B cell (primary cell): ENCODE measurements at regions of chr21 and their contacts with region 1.

Region 1: DNA sequence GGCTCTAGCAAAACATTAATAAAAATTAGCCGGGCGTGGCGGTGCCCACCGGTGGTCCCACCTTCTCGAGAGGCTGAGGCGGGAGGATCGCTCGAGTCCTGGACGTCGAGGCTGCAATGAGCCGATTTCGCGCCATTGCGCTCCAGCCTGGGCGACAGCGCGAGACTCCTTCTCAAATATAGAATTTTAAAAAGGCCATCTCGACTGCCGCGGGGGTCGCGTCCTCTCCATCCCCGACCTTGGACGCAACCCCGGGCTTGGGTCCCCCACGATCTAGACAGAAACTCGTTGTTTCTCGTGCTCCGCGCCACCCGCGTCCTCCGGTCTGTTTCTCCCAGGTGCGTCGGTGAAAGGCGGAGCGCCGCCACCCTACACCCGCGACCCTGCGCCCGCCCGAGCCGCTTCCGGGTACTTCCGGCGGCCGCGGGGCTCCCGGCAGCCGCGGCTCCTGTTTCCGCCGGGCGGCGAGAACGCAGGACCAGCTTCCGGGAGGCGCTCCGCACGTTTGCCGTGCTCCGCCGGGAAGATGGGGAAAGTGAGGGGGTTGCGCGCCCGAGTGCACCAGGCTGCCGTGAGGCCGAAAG is at the start of gene SLX9:
- DNase-seq: peak; percentile 84
- ATAC-seq: peak; percentile 87
- H3K4me3 ChIP-seq: peak within 1 kb of the TSS; percentile 54 to 80 (median 74)
- H3K4me3 Mint-ChIP-seq: peak within 1 kb of the TSS; percentile 89
- H3K27ac ChIP-seq: peak within 1 kb of the TSS in 1 of 2 donors; percentile 57
- H3K27ac Mint-ChIP-seq: peak within 1 kb of the TSS; percentile 86
- H3K4me1 ChIP-seq: peaks cover 26 to 40% of the 10 kb centered on the region in 2 donors
- H3K4me1 Mint-ChIP-seq: peaks cover 43% of the 10 kb centered on the region
- H3K27me3 ChIP-seq: no peaks in the 10 kb centered on the region
- H3K27me3 Mint-ChIP-seq: no peaks in the 10 kb centered on the region
- CTCF ChIP-seq: no peak
- total RNA-seq, gene SLX9: 12.6 and 15.9 TPM in 2 replicates

Region 2: DNA sequence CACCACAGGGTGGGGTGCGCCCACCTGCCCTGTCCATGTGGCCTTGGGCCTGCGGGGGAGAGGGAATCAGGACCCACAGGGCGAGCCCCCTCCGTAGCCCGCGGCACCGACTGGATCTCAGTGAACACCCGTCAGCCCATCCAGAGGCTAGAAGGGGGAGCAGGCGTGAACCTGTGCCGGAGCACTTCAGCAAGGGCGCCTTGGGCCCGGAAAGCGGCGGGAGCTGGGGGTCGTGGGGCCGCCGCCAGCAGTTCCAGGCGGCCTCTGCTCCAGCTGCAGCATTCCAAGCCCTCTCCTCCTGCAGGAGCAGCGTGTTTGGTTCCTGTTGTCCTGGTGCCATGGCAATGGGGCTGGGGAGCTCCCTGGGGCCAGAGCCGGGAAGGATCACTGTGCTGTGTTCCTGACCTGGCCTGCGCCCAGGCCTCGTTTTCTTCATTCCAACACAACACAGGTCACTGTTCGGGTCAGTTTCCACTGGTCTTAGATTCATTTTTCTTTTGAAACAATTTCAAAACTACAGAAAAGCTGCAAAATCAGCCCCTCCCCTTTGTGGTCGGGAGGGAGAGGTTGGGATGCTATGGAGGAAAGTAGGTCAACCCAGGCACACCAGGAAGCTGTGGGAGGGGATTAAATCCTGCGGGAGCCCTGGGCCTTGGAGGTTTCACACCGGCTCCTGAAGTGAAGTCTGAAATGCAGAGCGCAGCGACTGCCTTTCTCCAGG is 19.0 kb after region 1 on chr21:
- CTCF ChIA-PET with region 1: no interaction called
- POLR2A ChIA-PET with region 1: no interaction called
- intact Hi-C with region 1: no loop called
- DNase-seq: no peak
- ATAC-seq: no peak
- H3K4me3 ChIP-seq: no peak overlapping the region
- H3K4me3 Mint-ChIP-seq: no peak overlapping the region
- H3K27ac ChIP-seq: no peak overlapping the region
- H3K27ac Mint-ChIP-seq: no peak overlapping the region
- H3K4me1 ChIP-seq: no peaks in the 10 kb centered on the region
- H3K4me1 Mint-ChIP-seq: peaks cover 3% of the 10 kb centered on the region
- H3K27me3 ChIP-seq: no peaks in the 10 kb centered on the region
- H3K27me3 Mint-ChIP-seq: no peaks in the 10 kb centered on the region
- CTCF ChIP-seq: no peak

Region 3: DNA sequence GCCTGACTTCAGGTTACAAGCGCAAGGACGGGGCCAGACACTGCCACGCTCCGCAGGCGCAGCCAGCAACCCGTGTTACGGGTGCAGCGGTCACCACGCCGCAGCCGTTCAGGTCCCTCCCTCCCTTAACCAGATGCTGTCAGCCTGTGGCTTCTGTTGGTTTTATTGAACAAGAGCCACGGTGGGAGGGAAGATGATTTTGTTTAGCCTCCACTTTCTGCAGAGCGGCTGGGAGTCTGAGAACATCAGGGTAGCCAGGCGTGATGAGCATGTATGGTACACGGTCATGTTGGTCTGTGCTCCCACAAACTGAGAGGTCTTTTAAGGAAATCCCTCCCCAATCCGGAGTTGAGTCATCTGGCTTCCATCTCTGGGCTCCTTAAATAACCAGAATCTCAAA is 116.2 kb after region 1 on chr21:
- CTCF ChIA-PET with region 1: no interaction called
- POLR2A ChIA-PET with region 1: no interaction called
- intact Hi-C with region 1: no loop called
- DNase-seq: no peak
- ATAC-seq: no peak
- H3K4me3 ChIP-seq: no peak overlapping the region
- H3K4me3 Mint-ChIP-seq: no peak overlapping the region
- H3K27ac ChIP-seq: no peak overlapping the region
- H3K27ac Mint-ChIP-seq: no peak overlapping the region
- H3K4me1 ChIP-seq: no peaks in the 10 kb centered on the region
- H3K4me1 Mint-ChIP-seq: no peaks in the 10 kb centered on the region
- H3K27me3 ChIP-seq: peaks cover 0 to 25% (median 6%) of the 10 kb centered on the region in 4 experiments
- H3K27me3 Mint-ChIP-seq: peaks cover 43% of the 10 kb centered on the region
- CTCF ChIP-seq: no peak

Region 4: DNA sequence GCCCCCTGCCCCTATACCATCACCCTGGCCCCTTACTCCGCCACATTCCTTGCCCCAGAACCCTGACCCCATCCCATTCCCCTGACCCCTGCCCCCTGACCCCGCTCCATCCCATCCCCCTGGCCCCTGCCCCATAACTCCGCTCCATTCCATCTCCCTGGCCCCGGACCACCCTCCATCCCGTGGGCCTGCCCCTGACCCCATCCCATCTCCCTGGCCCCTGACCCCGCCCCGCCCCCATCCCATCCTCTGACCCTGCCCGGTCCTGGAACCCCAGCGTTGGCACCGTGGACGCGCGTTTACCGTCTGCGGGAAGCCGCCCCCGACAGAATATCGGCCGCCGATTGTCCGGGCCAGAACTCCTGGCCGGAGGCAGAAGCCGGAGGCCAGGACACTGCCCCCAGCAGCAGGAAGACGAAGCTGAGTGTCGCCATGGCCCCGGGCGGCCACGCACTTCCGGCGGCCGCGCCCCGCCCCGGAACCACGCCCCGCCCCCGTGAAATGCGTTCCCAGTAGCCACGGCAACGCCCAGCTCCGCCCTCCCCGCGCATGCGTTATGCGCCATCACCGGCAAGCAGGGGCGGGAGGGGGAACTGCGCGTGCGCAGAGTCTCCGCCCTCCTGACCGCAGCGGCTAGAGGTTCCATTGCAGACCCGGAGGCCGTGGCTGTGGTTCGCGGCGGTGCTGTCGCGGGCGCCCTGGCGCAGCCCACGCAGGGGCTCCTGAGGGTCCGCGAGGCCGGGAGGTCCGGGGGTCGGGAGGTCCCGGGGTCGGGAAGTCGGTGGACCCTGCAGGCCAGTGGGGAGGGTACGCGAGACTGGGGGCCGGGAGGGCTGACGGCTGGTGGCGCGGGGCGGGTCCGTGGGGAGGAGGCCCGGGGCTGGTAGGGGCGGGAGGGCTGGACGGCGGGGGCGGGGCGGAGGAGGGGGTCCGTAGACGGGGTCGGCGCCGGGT is 348.1 kb after region 1 on chr21 and contains the start of gene POFUT2:
- CTCF ChIA-PET with region 1: no interaction called
- POLR2A ChIA-PET with region 1: no interaction called
- intact Hi-C with region 1: loop called (anchors 5 kb)
- DNase-seq: peak; percentile 98
- ATAC-seq: peak; percentile 88
- H3K4me3 ChIP-seq: peak within 1 kb of the TSS in 4 of 5 experiments; percentile 62 to 83 (median 74)
- H3K4me3 Mint-ChIP-seq: peak within 1 kb of the TSS; percentile 90
- H3K27ac ChIP-seq: peak within 1 kb of the TSS; percentile 47 to 82
- H3K27ac Mint-ChIP-seq: peak within 1 kb of the TSS; percentile 96
- H3K4me1 ChIP-seq: peaks cover 10 to 19% of the 10 kb centered on the region in 2 donors
- H3K4me1 Mint-ChIP-seq: peaks cover 15% of the 10 kb centered on the region
- H3K27me3 ChIP-seq: no peaks in the 10 kb centered on the region
- H3K27me3 Mint-ChIP-seq: no peaks in the 10 kb centered on the region
- CTCF ChIP-seq: no peak
- total RNA-seq, gene POFUT2: 38.3 and 44.5 TPM in 2 replicates